T-cell (primary cell): ENCODE measurements at regions of chr13 and their contacts with region 1.

Region 1: DNA sequence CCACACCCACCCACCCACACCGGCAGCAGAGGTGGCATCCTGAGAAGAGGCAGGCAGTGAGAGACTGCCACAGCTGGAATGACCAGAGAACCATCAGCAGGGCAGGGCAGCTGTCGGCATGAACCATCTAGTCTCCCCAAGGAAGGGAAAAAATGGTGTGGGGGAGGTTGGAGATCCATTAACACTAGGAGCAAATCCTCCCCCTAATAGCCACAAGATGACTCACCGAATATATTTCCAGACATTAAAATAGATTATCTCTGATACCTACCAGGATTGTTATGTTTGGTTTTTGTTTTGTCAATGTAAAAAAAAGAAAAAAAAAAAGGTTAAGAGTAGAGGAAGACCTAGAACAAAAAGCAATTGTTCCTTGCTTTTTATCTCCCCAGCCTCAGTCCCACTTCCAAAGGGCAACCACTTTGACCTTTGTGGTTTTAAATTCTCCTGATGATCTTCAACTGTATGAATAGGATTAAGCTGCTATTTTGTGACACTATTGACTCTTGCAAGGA is 34.2 kb downstream of the THSD1 start:
- DNase-seq: no peak
- ATAC-seq: no peak
- H3K4me3 ChIP-seq: no peak overlapping the region
- H3K4me3 Mint-ChIP-seq: no peak overlapping the region
- H3K27ac ChIP-seq: no peak overlapping the region
- H3K27ac Mint-ChIP-seq: no peak overlapping the region
- H3K4me1 ChIP-seq: no peaks in the 10 kb centered on the region
- H3K4me1 Mint-ChIP-seq: no peaks in the 10 kb centered on the region
- H3K27me3 ChIP-seq: no peaks in the 10 kb centered on the region
- H3K27me3 Mint-ChIP-seq: no peaks in the 10 kb centered on the region

Region 2: GRCh38 chr13:52405767-52406494 is 34.1 kb after region 1 on chr13 and contains the start of gene THSD1:
- CTCF ChIA-PET with region 1: interaction called in 1 of 2 experiments, 13 read pairs
- POLR2A ChIA-PET with region 1: no interaction called
- DNase-seq: peak in 11 of 35 experiments; percentile 1 to 17 (median 8)
- ATAC-seq: peak; percentile 51 to 68 (median 62)
- H3K4me3 ChIP-seq: peak within 1 kb of the TSS; percentile 38 to 82
- H3K4me3 Mint-ChIP-seq: peak within 1 kb of the TSS; percentile 59 to 78 (median 59)
- H3K27ac ChIP-seq: no peak within 1 kb of the TSS
- H3K27ac Mint-ChIP-seq: no peak within 1 kb of the TSS
- H3K4me1 ChIP-seq: peaks cover 13 to 19% of the 10 kb centered on the region in 2 experiments
- H3K4me1 Mint-ChIP-seq: peaks cover 19 to 25% (median 22%) of the 10 kb centered on the region in 3 donors
- H3K27me3 ChIP-seq: peaks cover 0 to 16% of the 10 kb centered on the region in 2 experiments
- H3K27me3 Mint-ChIP-seq: peaks cover 23 to 24% of the 10 kb centered on the region in 2 donors
- total RNA-seq, gene THSD1: 0.26 to 0.63 (median 0.47) TPM